CD8-positive, alpha-beta T cell (primary cell): ENCODE measurements at regions of chrX and their contacts with region 1.

Region 1: GRCh38 chrX:108091266-108091877 is at the starts of genes ATG4A and PSMD10:
- DNase-seq: peak; percentile 75 to 94 (median 87)
- ATAC-seq: peak; percentile 94
- H3K4me3 ChIP-seq: peak within 1 kb of the TSS; percentile 82 to 90
- H3K4me3 Mint-ChIP-seq: no peak within 1 kb of the TSS
- H3K27ac ChIP-seq: peak within 1 kb of the TSS; percentile 88 to 92
- H3K27ac Mint-ChIP-seq: no peak within 1 kb of the TSS
- H3K4me1 ChIP-seq: peaks cover 9% of the 10 kb centered on the region
- H3K4me1 Mint-ChIP-seq: peaks cover 24% of the 10 kb centered on the region
- H3K27me3 ChIP-seq: no peaks in the 10 kb centered on the region
- H3K27me3 Mint-ChIP-seq: no peaks in the 10 kb centered on the region
- CTCF ChIP-seq: no peak
- total RNA-seq, gene ATG4A: 3.7 to 6.3 TPM
- total RNA-seq, gene PSMD10: 22.6 to 23.5 TPM

Region 2: GRCh38 chrX:106611679-106612392 is 1479.5 kb before region 1 on chrX and contains the start of gene RADX:
- CTCF ChIA-PET with region 1: no interaction called
- POLR2A ChIA-PET with region 1: no interaction called
- intact Hi-C with region 1: loop called in 1 of 2 experiments (anchors 10 kb)
- DNase-seq: peak; percentile 72 to 94 (median 83)
- ATAC-seq: peak; percentile 93
- H3K4me3 ChIP-seq: peak within 1 kb of the TSS; percentile 58 to 88
- H3K4me3 Mint-ChIP-seq: peak within 1 kb of the TSS; percentile 94
- H3K27ac ChIP-seq: peak within 1 kb of the TSS; percentile 77 to 81
- H3K27ac Mint-ChIP-seq: peak within 1 kb of the TSS; percentile 93
- H3K4me1 ChIP-seq: peaks cover 8% of the 10 kb centered on the region
- H3K4me1 Mint-ChIP-seq: peaks cover 35% of the 10 kb centered on the region
- H3K27me3 ChIP-seq: no peaks in the 10 kb centered on the region
- H3K27me3 Mint-ChIP-seq: no peaks in the 10 kb centered on the region
- CTCF ChIP-seq: no peak
- total RNA-seq, gene RADX: 8.9 to 9.1 TPM

Region 3: GRCh38 chrX:107627838-107628661 is 463.3 kb before region 1 on chrX and contains the start of gene PRPS1:
- CTCF ChIA-PET with region 1: no interaction called
- POLR2A ChIA-PET with region 1: no interaction called
- intact Hi-C with region 1: loop called (anchors 1 to 10 kb)
- DNase-seq: peak; percentile 76 to 95 (median 87)
- ATAC-seq: peak; percentile 96
- H3K4me3 ChIP-seq: peak within 1 kb of the TSS; percentile 81 to 95
- H3K4me3 Mint-ChIP-seq: peak within 1 kb of the TSS; percentile 87
- H3K27ac ChIP-seq: peak within 1 kb of the TSS; percentile 79 to 95
- H3K27ac Mint-ChIP-seq: peak within 1 kb of the TSS; percentile 93
- H3K4me1 ChIP-seq: peaks cover 8% of the 10 kb centered on the region
- H3K4me1 Mint-ChIP-seq: peaks cover 33% of the 10 kb centered on the region
- H3K27me3 ChIP-seq: no peaks in the 10 kb centered on the region
- H3K27me3 Mint-ChIP-seq: no peaks in the 10 kb centered on the region
- CTCF ChIP-seq: no peak
- total RNA-seq, gene PRPS1: 65.6 to 74.7 TPM

Region 4: DNA sequence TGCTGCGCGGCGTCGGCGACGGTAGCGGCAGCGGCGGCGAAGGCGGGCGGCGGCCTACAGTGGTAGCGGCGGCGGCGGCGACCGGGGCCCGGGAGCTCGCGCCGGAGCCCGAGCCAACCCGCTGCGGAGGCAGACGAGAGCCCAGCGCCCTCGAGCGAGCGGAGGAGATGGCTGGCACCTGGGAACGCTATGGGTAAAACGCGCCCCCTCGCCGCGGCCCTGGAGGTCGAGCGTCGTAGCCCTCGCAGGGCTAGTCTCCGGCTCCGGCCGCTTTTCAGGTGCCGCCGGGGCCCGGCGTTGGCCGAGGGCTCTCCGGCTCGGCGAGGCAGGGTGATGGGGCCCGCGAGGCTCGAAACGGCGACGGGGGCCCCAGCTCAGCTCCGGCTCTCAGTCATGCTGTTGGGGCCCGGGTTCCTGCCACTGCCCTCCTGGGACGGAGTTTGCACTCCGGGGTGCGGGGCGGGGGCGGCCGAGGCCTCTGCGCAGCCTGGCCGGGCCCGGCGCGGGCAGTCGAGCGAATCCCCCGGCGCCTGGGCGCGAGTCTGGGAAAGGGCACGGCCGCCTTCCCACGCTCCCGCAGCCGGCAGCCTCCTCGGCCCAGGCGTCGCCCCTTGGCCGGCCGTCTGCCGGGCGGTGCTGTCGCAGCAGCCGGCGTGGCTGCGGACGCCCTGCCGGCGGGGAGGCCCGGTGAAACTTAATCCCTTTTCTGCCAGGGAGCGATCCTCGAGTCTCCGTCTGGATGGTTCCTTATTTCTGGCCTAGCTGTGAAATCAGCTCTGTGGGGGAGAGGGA is 264.9 kb before region 1 on chrX:
- CTCF ChIA-PET with region 1: no interaction called
- POLR2A ChIA-PET with region 1: no interaction called
- intact Hi-C with region 1: loop called (anchors 5 kb)
- DNase-seq: peak; percentile 2 to 67 (median 25)
- ATAC-seq: peak; percentile 66
- H3K4me3 ChIP-seq: peak overlapping the region; percentile 52 to 61
- H3K4me3 Mint-ChIP-seq: peak overlapping the region; percentile 89
- H3K27ac ChIP-seq: peak overlapping the region in 1 of 2 experiments; percentile 69
- H3K27ac Mint-ChIP-seq: peak overlapping the region; percentile 86
- H3K4me1 ChIP-seq: peaks cover 25% of the 10 kb centered on the region
- H3K4me1 Mint-ChIP-seq: peaks cover 43% of the 10 kb centered on the region
- H3K27me3 ChIP-seq: no peaks in the 10 kb centered on the region
- H3K27me3 Mint-ChIP-seq: peaks cover 8% of the 10 kb centered on the region
- CTCF ChIP-seq: no peak

Region 5: DNA sequence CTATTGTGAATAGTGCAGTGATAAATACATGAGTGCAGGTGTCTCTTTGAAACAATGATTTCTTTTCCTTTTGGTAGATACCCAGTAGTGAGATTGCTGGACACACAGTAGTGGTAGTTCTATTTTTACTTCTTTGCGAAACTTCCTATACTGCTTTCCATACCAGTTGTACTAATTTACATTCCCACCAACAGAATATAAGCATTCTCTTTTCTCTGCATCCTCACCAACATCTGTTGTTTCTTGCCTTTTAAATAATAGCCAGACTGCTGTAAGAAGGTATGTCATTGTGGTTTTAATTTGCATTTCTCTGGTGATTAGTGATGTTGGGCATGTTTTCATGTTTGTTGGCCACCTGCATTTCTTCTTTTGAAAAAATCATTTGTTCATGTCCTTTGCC is 240.9 kb after region 1 on chrX:
- CTCF ChIA-PET with region 1: no interaction called
- POLR2A ChIA-PET with region 1: no interaction called
- intact Hi-C with region 1: no loop called
- DNase-seq: no peak
- ATAC-seq: no peak
- H3K4me3 ChIP-seq: no peak overlapping the region
- H3K4me3 Mint-ChIP-seq: no peak overlapping the region
- H3K27ac ChIP-seq: no peak overlapping the region
- H3K27ac Mint-ChIP-seq: no peak overlapping the region
- H3K4me1 ChIP-seq: no peaks in the 10 kb centered on the region
- H3K4me1 Mint-ChIP-seq: no peaks in the 10 kb centered on the region
- H3K27me3 ChIP-seq: no peaks in the 10 kb centered on the region
- H3K27me3 Mint-ChIP-seq: no peaks in the 10 kb centered on the region
- CTCF ChIP-seq: no peak

Region 6: DNA sequence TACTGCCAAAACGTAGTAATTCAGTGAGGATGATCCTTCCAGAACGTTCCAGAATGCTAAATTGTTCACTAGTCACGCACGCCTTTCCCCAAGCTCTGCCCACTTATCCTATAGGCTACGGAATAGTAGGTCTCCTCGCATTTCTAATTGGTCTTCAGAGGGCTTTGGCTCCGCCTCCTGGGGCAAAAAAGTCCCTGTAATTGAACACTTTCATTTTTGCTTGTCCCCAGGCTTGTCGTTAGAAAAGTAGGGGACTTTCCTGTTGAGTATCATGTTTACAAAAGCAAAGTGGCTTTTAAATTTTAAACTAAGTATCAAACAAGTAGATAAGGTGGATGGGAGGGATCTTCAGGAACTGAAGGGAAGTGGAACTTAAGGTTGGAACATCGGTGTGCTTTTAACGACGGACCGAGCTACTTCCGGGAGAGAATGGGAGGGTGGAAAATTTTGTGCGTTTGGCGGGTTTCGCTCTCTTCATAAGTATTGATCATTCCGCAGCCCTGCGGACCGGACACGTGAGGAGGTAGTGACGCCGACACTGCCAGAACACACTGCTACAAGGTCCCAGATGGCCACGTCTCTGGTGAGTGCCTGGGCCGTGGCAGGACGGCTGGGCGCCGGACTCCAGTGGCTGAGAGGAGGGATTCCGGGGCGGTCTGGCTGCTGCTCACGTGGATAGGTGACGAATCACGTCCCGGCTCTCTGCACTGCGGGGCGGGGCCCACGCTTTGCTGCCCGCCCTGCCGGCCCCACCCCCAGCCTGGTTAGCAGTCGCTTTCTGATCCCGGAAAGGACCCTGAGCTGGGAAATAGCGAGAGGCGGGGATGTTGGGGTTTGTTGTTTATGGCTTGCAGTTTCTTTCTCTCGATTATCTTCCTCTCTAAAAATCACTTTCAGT is 1445.3 kb after region 1 on chrX and contains the start of gene NXT2:
- CTCF ChIA-PET with region 1: no interaction called
- POLR2A ChIA-PET with region 1: no interaction called
- intact Hi-C with region 1: loop called (anchors 5 kb)
- DNase-seq: peak; percentile 68 to 93 (median 84)
- ATAC-seq: peak; percentile 98
- H3K4me3 ChIP-seq: peak within 1 kb of the TSS; percentile 74 to 80
- H3K4me3 Mint-ChIP-seq: peak within 1 kb of the TSS; percentile 96
- H3K27ac ChIP-seq: peak within 1 kb of the TSS; percentile 72 to 91
- H3K27ac Mint-ChIP-seq: peak within 1 kb of the TSS; percentile 98
- H3K4me1 ChIP-seq: no peaks in the 10 kb centered on the region
- H3K4me1 Mint-ChIP-seq: peaks cover 17% of the 10 kb centered on the region
- H3K27me3 ChIP-seq: no peaks in the 10 kb centered on the region
- H3K27me3 Mint-ChIP-seq: peaks cover 13% of the 10 kb centered on the region
- CTCF ChIP-seq: no peak
- total RNA-seq, gene NXT2: 4.5 to 4.6 TPM